ENCODE measurements at regions of chr20 and their contacts with region 1.

Region 1: GRCh38 chr20:57498425-57499400 is 26.2 kb downstream of the CTCFL start:
- DNase-seq: no peak
- H3K4me3 ChIP-seq: no peak overlapping the region
- H3K27ac ChIP-seq: no peak overlapping the region
- H3K4me1 ChIP-seq: peaks cover 2% of the 10 kb centered on the region
- H3K27me3 ChIP-seq: peaks cover 13 to 18% of the 10 kb centered on the region in 2 experiments
- CTCF ChIP-seq: peak; percentile 6 to 50
- POLR2A ChIP-seq: no peak

Region 2: DNA sequence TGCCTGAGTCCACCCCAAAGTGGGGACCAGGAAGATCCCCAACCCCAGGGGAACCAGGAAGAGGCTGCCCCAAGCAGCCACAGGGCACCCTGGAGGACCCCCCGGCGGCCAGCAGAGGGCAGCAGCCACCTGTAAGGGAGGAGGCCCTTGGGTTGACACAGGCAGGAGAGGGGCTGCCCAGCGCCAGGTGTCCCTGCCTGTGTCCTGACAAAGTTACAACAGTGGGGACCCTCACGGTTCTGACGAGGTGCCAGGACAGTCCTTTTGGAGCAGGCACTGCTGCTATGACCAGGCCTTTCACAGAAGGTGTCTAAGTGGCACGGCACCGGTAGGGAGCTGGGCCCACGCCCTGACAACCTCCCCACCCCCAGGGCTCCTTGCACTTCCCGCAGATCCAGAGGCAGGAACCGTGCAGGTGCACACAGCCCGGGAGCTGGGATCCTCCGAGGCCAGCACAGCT is 409.0 kb before region 1 on chr20:
- CTCF ChIA-PET with region 1: no interaction called
- POLR2A ChIA-PET with region 1: no interaction called
- dilution Hi-C with region 1: no loop called
- intact Hi-C with region 1: loop called (anchors 10 kb)
- DNase-seq: peak; percentile 7
- H3K4me3 ChIP-seq: no peak overlapping the region
- H3K27ac ChIP-seq: no peak overlapping the region
- H3K4me1 ChIP-seq: no peaks in the 10 kb centered on the region
- H3K27me3 ChIP-seq: no peaks in the 10 kb centered on the region
- CTCF ChIP-seq: peak; percentile 67 to 88
- POLR2A ChIP-seq: no peak

Region 3: DNA sequence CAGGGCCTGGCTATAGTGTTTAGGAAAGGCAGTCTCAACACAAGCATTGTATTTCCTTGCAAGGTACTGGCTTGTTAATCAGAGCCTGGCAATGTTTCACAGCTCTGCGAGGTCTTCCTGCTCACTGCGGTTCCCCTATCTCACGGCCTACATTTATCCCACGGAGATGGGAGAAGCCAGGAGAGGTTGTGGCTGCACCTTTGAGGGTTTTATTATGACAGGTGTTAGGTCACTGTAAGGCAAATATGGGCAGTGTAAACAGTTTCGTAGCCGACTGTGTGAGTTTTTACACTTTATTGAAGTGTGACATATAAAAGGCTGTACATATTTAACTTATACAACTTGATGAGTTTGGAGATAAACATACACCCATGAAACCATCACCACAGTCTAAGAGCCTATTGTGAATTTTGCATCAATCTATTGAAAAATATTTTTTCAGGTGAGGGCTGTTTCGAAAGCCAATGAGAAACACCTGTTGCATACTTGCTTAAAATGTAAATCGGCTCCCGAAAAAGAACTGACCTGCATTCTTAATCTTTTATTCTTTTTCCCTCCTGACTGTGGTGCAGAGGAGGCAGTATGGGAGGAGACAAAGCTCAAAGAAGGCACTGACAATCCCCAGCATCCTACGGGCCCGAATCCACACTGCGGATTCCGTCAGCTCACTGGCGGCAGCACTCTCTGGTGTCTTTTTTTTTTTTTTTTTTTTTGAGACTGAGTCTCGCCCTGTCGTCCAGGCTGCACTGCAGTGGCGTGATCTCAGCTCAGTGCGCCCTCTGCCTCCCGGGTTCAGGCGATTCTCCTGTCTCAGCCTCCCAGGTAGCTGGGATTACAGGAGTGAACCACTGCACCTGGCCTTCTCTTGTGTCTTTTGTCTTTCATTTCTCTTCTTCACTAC is 115.0 kb before region 1 on chr20:
- CTCF ChIA-PET with region 1: interaction called, 86 read pairs
- POLR2A ChIA-PET with region 1: no interaction called
- dilution Hi-C with region 1: no loop called
- intact Hi-C with region 1: loop called (anchors 1 kb)
- DNase-seq: no peak
- H3K4me3 ChIP-seq: no peak overlapping the region
- H3K27ac ChIP-seq: no peak overlapping the region
- H3K4me1 ChIP-seq: no peaks in the 10 kb centered on the region
- H3K27me3 ChIP-seq: no peaks in the 10 kb centered on the region
- CTCF ChIP-seq: no peak
- POLR2A ChIP-seq: no peak

Region 4: GRCh38 chr20:57483287-57484050 is 15.2 kb before region 1 on chr20:
- CTCF ChIA-PET with region 1: no interaction called
- POLR2A ChIA-PET with region 1: no interaction called
- dilution Hi-C with region 1: no loop called
- intact Hi-C with region 1: no loop called
- DNase-seq: no peak
- H3K4me3 ChIP-seq: no peak overlapping the region
- H3K27ac ChIP-seq: no peak overlapping the region
- H3K4me1 ChIP-seq: no peaks in the 10 kb centered on the region
- H3K27me3 ChIP-seq: peaks cover 1 to 6% of the 10 kb centered on the region in 2 experiments
- CTCF ChIP-seq: no peak
- POLR2A ChIP-seq: no peak

Region 5: GRCh38 chr20:57514273-57514751 is 15.6 kb after region 1 on chr20:
- CTCF ChIA-PET with region 1: interaction called, 12 read pairs
- POLR2A ChIA-PET with region 1: no interaction called
- dilution Hi-C with region 1: no loop called
- intact Hi-C with region 1: no loop called
- DNase-seq: peak; percentile 68
- H3K4me3 ChIP-seq: no peak overlapping the region
- H3K27ac ChIP-seq: no peak overlapping the region
- H3K4me1 ChIP-seq: no peaks in the 10 kb centered on the region
- H3K27me3 ChIP-seq: no peaks in the 10 kb centered on the region
- CTCF ChIP-seq: peak; percentile 53 to 63
- POLR2A ChIP-seq: no peak

Measured in endothelial cell of umbilical vein (primary cell).